B cell (primary cell): ENCODE measurements at regions of chr12 and their contacts with region 1.

Region 1: DNA sequence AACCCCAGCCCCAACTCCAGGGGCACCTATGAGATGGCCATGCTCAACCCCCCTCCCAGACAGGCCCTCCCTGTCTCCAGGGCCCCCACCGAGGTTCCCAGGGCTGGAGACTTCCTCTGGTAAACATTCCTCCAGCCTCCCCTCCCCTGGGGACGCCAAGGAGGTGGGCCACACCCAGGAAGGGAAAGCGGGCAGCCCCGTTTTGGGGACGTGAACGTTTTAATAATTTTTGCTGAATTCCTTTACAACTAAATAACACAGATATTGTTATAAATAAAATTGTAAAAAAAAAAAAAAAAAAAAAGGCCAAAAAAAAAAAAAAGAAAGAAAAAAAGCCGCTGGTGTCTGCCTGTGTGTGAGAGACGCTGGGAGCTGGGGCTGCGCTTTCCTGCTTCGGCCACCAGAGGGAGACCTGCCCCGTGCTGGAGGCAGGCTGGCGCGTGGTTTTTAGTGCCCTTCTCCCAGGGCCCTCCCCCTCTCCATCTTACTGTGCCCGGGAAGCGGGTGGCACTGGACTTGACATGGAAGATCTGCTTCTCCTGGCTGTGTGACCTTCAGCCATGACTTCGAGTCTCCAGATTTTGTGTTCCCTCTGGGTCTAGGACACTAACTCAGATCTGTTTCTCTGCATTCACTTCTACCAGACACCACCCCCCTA is 3.4 kb upstream of the NXPH4 start:
- DNase-seq: peak; percentile 89
- ATAC-seq: peak; percentile 42
- H3K4me3 ChIP-seq: peak overlapping the region in 1 of 5 experiments; percentile 20
- H3K4me3 Mint-ChIP-seq: peak overlapping the region; percentile 54
- H3K27ac ChIP-seq: no peak overlapping the region
- H3K27ac Mint-ChIP-seq: peak overlapping the region; percentile 56
- H3K4me1 ChIP-seq: peaks cover 43 to 49% of the 10 kb centered on the region in 2 donors
- H3K4me1 Mint-ChIP-seq: peaks cover 43% of the 10 kb centered on the region
- H3K27me3 ChIP-seq: peaks cover 0 to 51% (median 17%) of the 10 kb centered on the region in 4 experiments
- H3K27me3 Mint-ChIP-seq: peaks cover 24% of the 10 kb centered on the region
- CTCF ChIP-seq: peak; percentile 93

Region 2: GRCh38 chr12:57229634-57230380 is 16.6 kb after region 1 on chr12 and contains the start of gene SHMT2:
- CTCF ChIA-PET with region 1: interaction called, 838 read pairs
- POLR2A ChIA-PET with region 1: interaction called, 28 read pairs
- intact Hi-C with region 1: loop called (anchors 1 kb)
- DNase-seq: peak; percentile 95
- ATAC-seq: peak; percentile 56
- H3K4me3 ChIP-seq: peak within 1 kb of the TSS; percentile 73 to 94 (median 89)
- H3K4me3 Mint-ChIP-seq: peak within 1 kb of the TSS; percentile 99
- H3K27ac ChIP-seq: peak within 1 kb of the TSS; percentile 67 to 80
- H3K27ac Mint-ChIP-seq: peak within 1 kb of the TSS; percentile 97
- H3K4me1 ChIP-seq: peaks cover 63 to 78% of the 10 kb centered on the region in 2 donors
- H3K4me1 Mint-ChIP-seq: peaks cover 84% of the 10 kb centered on the region
- H3K27me3 ChIP-seq: peaks cover 0 to 26% (median 10%) of the 10 kb centered on the region in 4 experiments
- H3K27me3 Mint-ChIP-seq: peaks cover 10% of the 10 kb centered on the region
- CTCF ChIP-seq: no peak
- total RNA-seq, gene SHMT2: 147 and 166 TPM in 2 replicates

Region 3: GRCh38 chr12:57238854-57239554 is 25.8 kb after region 1 on chr12:
- CTCF ChIA-PET with region 1: interaction called, 838 read pairs
- POLR2A ChIA-PET with region 1: interaction called, 110 read pairs
- intact Hi-C with region 1: loop called (anchors 1 kb)
- DNase-seq: peak; percentile 93
- ATAC-seq: peak; percentile 46
- H3K4me3 ChIP-seq: peak overlapping the region; percentile 19 to 79 (median 75)
- H3K4me3 Mint-ChIP-seq: peak overlapping the region; percentile 89
- H3K27ac ChIP-seq: no peak overlapping the region
- H3K27ac Mint-ChIP-seq: peak overlapping the region; percentile 92
- H3K4me1 ChIP-seq: peaks cover 92 to 99% of the 10 kb centered on the region in 2 donors
- H3K4me1 Mint-ChIP-seq: peaks cover 92% of the 10 kb centered on the region
- H3K27me3 ChIP-seq: peaks cover 0 to 70% (median 30%) of the 10 kb centered on the region in 4 experiments
- H3K27me3 Mint-ChIP-seq: peaks cover 12% of the 10 kb centered on the region
- CTCF ChIP-seq: peak; percentile 100

Region 4: GRCh38 chr12:57261428-57261865 is 48.3 kb after region 1 on chr12:
- CTCF ChIA-PET with region 1: interaction called, 10 read pairs
- POLR2A ChIA-PET with region 1: no interaction called
- intact Hi-C with region 1: no loop called
- DNase-seq: no peak
- ATAC-seq: no peak
- H3K4me3 ChIP-seq: no peak overlapping the region
- H3K4me3 Mint-ChIP-seq: no peak overlapping the region
- H3K27ac ChIP-seq: no peak overlapping the region
- H3K27ac Mint-ChIP-seq: no peak overlapping the region
- H3K4me1 ChIP-seq: peaks cover 0 to 6% of the 10 kb centered on the region in 2 donors
- H3K4me1 Mint-ChIP-seq: peaks cover 9% of the 10 kb centered on the region
- H3K27me3 ChIP-seq: no peaks in the 10 kb centered on the region
- H3K27me3 Mint-ChIP-seq: no peaks in the 10 kb centered on the region
- CTCF ChIP-seq: no peak